CD4-positive, alpha-beta T cell (primary cell): ENCODE measurements at regions of chrX and their contacts with region 1.

Region 1: GRCh38 chrX:154136627-154137161 is 7.3 kb upstream of the OPN1LW start:
- DNase-seq: peak; percentile 43 to 86 (median 61)
- ATAC-seq: peak; percentile 62
- H3K4me3 ChIP-seq: peak overlapping the region; percentile 46
- H3K4me3 Mint-ChIP-seq: peak overlapping the region; percentile 82
- H3K27ac ChIP-seq: peak overlapping the region; percentile 64 to 85
- H3K27ac Mint-ChIP-seq: peak overlapping the region; percentile 94
- H3K4me1 ChIP-seq: peaks cover 36% of the 10 kb centered on the region
- H3K4me1 Mint-ChIP-seq: peaks cover 23% of the 10 kb centered on the region
- H3K27me3 ChIP-seq: no peaks in the 10 kb centered on the region
- H3K27me3 Mint-ChIP-seq: no peaks in the 10 kb centered on the region
- CTCF ChIP-seq: peak; percentile 75

Region 2: GRCh38 chrX:154097597-154098541 is 38.8 kb before region 1 on chrX and contains the start of gene MECP2:
- CTCF ChIA-PET with region 1: no interaction called
- POLR2A ChIA-PET with region 1: interaction called, 10 read pairs
- intact Hi-C with region 1: loop called in 1 of 2 experiments (anchors 1 kb)
- DNase-seq: peak; percentile 69 to 94 (median 82)
- ATAC-seq: peak; percentile 86
- H3K4me3 ChIP-seq: peak within 1 kb of the TSS; percentile 90
- H3K4me3 Mint-ChIP-seq: peak within 1 kb of the TSS; percentile 97
- H3K27ac ChIP-seq: peak within 1 kb of the TSS; percentile 80 to 86
- H3K27ac Mint-ChIP-seq: peak within 1 kb of the TSS; percentile 97
- H3K4me1 ChIP-seq: peaks cover 32% of the 10 kb centered on the region
- H3K4me1 Mint-ChIP-seq: peaks cover 39% of the 10 kb centered on the region
- H3K27me3 ChIP-seq: no peaks in the 10 kb centered on the region
- H3K27me3 Mint-ChIP-seq: no peaks in the 10 kb centered on the region
- CTCF ChIP-seq: no peak
- total RNA-seq, gene MECP2: 120 to 133 TPM

Region 3: GRCh38 chrX:154123241-154124219 is 13.2 kb before region 1 on chrX:
- CTCF ChIA-PET with region 1: interaction called, 4 read pairs
- POLR2A ChIA-PET with region 1: interaction called, 20 read pairs
- intact Hi-C with region 1: no loop called
- DNase-seq: peak in 9 of 14 experiments; percentile 9 to 79 (median 23)
- ATAC-seq: peak; percentile 88
- H3K4me3 ChIP-seq: no peak overlapping the region
- H3K4me3 Mint-ChIP-seq: no peak overlapping the region
- H3K27ac ChIP-seq: no peak overlapping the region
- H3K27ac Mint-ChIP-seq: peak overlapping the region; percentile 4
- H3K4me1 ChIP-seq: peaks cover 37% of the 10 kb centered on the region
- H3K4me1 Mint-ChIP-seq: peaks cover 29% of the 10 kb centered on the region
- H3K27me3 ChIP-seq: no peaks in the 10 kb centered on the region
- H3K27me3 Mint-ChIP-seq: no peaks in the 10 kb centered on the region
- CTCF ChIP-seq: no peak